ENCODE measurements at regions of chr2 and their contacts with region 1.

Region 1: DNA sequence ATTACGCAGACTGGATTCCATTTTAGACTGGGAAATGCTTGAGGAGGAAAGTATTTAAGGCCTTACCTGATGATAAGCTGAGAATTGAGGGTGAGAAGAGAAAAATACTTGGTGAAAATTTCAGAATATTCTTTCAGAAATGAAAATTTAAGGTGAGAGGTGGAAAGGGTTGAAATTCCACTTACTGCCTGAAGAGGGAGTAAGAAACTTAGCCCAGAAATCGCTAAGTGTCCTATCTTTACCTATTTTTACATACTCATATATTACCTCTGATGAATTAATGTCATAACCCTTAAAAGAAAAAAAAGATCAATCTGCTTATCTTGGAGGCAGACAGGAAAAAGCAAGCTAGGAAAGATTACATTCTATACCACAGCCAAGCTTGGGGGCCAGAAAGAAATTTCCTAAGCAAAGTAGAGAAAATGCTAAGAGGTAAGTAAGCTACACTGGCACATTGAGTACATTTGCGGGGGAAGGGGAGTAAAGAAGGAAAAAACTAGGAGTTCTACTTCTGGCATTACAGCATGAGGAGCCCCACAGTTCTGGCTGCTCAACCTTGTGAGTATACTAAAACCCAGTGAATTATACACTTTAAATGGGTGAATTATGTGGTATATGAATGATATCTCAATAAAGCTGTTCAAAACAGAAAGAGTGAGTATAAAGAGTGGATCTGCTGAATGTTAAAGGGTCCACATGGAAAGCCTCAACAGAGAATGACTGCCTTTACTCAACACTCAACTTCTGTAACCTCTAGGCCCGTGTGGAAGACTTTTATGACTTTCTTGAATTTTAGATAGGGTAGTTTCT is 33.8 kb downstream of the SMC6 start:
- DNase-seq: no peak
- H3K4me3 ChIP-seq: no peak overlapping the region
- CTCF ChIP-seq: peak; percentile 51

Region 2: GRCh38 chr2:17518212-17519154 is 201.3 kb before region 1 on chr2 and contains the start of gene RAD51AP2:
- CTCF ChIA-PET with region 1: no interaction called
- POLR2A ChIA-PET with region 1: no interaction called
- DNase-seq: peak; percentile 1
- H3K4me3 ChIP-seq: peak within 1 kb of the TSS; percentile 57
- CTCF ChIP-seq: no peak

Region 3: GRCh38 chr2:17706845-17707244 is 12.9 kb before region 1 on chr2:
- CTCF ChIA-PET with region 1: interaction called, 73 read pairs
- POLR2A ChIA-PET with region 1: no interaction called
- DNase-seq: no peak
- H3K4me3 ChIP-seq: no peak overlapping the region
- CTCF ChIP-seq: no peak

Region 4: GRCh38 chr2:17733599-17733998 is 13.8 kb after region 1 on chr2:
- CTCF ChIA-PET with region 1: interaction called, 49 read pairs
- POLR2A ChIA-PET with region 1: no interaction called
- DNase-seq: no peak
- H3K4me3 ChIP-seq: no peak overlapping the region
- CTCF ChIP-seq: no peak

Region 5: GRCh38 chr2:17740203-17740602 is 20.4 kb after region 1 on chr2:
- CTCF ChIA-PET with region 1: interaction called, 49 read pairs
- POLR2A ChIA-PET with region 1: no interaction called
- DNase-seq: no peak
- H3K4me3 ChIP-seq: no peak overlapping the region
- CTCF ChIP-seq: no peak

Region 6: GRCh38 chr2:17780546-17780945 is 60.8 kb after region 1 on chr2:
- CTCF ChIA-PET with region 1: no interaction called
- POLR2A ChIA-PET with region 1: no interaction called
- DNase-seq: no peak
- H3K4me3 ChIP-seq: no peak overlapping the region
- CTCF ChIP-seq: no peak

Region 7: GRCh38 chr2:17830053-17831034 is 110.6 kb after region 1 on chr2:
- CTCF ChIA-PET with region 1: interaction called, 35 read pairs
- POLR2A ChIA-PET with region 1: no interaction called
- DNase-seq: peak; percentile 9
- H3K4me3 ChIP-seq: peak overlapping the region; percentile 32
- CTCF ChIP-seq: peak; percentile 86